ENCODE measurements at regions of chr12 and their contacts with region 1.

Region 1: DNA sequence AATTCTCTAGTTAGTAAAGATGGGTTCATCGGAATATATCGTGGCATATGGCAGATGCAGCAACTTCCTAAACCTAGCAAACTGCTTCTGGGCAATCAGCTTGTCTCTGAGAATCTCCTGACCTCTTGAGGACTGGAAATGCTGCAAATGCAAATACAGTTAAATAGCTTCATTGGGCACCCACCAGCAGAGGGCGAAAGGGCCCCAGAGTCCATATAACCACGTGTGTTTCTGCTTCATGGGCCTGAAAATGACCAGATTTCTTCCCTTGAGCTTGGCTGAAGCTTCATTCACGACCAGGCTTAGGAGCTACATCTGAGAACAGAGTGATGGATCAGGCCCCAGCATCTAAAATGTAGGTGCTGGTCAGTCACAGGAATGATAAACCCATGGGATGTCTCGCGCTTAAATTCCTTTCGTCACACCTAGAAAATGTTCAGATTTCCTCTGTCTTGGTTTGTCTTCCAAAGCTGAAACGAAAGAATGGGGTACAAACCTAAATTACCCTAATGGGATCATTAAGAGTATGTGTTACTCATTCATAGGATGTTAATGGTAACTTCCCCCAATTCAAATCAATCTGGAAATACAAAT is 1482.5 kb upstream of the TMEM132C start:
- DNase-seq: no peak
- H3K4me3 Mint-ChIP-seq: no peak overlapping the region
- H3K27ac Mint-ChIP-seq: no peak overlapping the region
- H3K4me1 Mint-ChIP-seq: no peaks in the 10 kb centered on the region
- H3K27me3 Mint-ChIP-seq: peaks cover 1% of the 10 kb centered on the region

Region 2: GRCh38 chr12:126668538-126668937 is 115.9 kb before region 1 on chr12:
- intact Hi-C with region 1: no loop called
- DNase-seq: no peak
- H3K4me3 Mint-ChIP-seq: no peak overlapping the region
- H3K27ac Mint-ChIP-seq: no peak overlapping the region
- H3K4me1 Mint-ChIP-seq: no peaks in the 10 kb centered on the region
- H3K27me3 Mint-ChIP-seq: no peaks in the 10 kb centered on the region

Region 3: GRCh38 chr12:126726481-126727217 is 57.8 kb before region 1 on chr12:
- intact Hi-C with region 1: no loop called
- DNase-seq: no peak
- H3K4me3 Mint-ChIP-seq: no peak overlapping the region
- H3K27ac Mint-ChIP-seq: no peak overlapping the region
- H3K4me1 Mint-ChIP-seq: no peaks in the 10 kb centered on the region
- H3K27me3 Mint-ChIP-seq: peaks cover 18% of the 10 kb centered on the region

Region 4: GRCh38 chr12:126874427-126875026 is 90.1 kb after region 1 on chr12:
- intact Hi-C with region 1: loop called (anchors 1 kb)
- DNase-seq: peak; percentile 30
- H3K4me3 Mint-ChIP-seq: no peak overlapping the region
- H3K27ac Mint-ChIP-seq: no peak overlapping the region
- H3K4me1 Mint-ChIP-seq: no peaks in the 10 kb centered on the region
- H3K27me3 Mint-ChIP-seq: no peaks in the 10 kb centered on the region